ENCODE measurements at regions of chr2 and their contacts with region 1.

Region 1: GRCh38 chr2:188870289-188870688 is 103.9 kb upstream of the COL3A1 start:
- DNase-seq: no peak
- H3K4me3 Mint-ChIP-seq: no peak overlapping the region
- H3K27ac Mint-ChIP-seq: no peak overlapping the region
- H3K4me1 Mint-ChIP-seq: no peaks in the 10 kb centered on the region
- H3K27me3 Mint-ChIP-seq: no peaks in the 10 kb centered on the region

Region 2: GRCh38 chr2:188884046-188884445 is 13.8 kb after region 1 on chr2:
- intact Hi-C with region 1: no loop called
- DNase-seq: no peak
- H3K4me3 Mint-ChIP-seq: no peak overlapping the region
- H3K27ac Mint-ChIP-seq: no peak overlapping the region
- H3K4me1 Mint-ChIP-seq: no peaks in the 10 kb centered on the region
- H3K27me3 Mint-ChIP-seq: no peaks in the 10 kb centered on the region

Region 3: DNA sequence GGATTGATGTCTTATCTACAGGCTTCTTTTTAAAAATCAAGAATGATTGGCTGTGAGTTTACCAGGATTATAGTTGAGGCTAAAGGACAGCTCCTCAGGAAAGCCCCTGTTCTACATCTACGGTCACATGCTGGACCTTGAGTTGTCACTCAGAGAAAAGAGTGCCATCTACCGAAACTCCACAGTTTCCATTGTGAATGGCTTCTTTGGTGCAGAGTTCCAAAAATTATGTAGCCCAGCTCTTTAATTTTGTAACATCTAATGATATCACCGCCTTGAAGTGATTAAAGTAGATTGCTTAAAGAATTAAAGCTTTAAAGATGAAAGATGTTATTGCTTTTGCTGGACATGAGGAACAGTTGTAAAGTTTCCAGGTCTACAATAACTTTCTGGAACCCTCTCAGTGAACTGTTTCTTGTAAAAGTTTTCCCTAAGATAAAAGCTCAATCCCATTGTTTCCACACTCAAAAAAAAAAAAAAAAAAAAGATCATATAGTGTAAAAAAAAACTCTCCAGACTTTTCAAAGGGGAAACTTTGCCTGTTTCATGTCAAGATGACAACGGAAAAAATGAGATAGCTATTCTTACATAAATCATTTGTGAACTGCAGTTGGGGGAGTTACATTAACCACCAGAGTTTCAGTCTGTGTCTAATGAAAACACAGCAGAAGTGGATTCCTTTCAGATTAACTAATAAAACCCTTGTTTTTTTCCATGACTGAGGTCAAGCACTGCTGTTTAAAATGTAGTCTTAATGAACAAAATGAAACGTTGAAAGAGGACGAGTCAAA is 108.2 kb after region 1 on chr2:
- intact Hi-C with region 1: loop called (anchors 1 kb)
- DNase-seq: no peak
- H3K4me3 Mint-ChIP-seq: peak overlapping the region; percentile 5
- H3K27ac Mint-ChIP-seq: peak overlapping the region; percentile 77
- H3K4me1 Mint-ChIP-seq: peaks cover 17% of the 10 kb centered on the region
- H3K27me3 Mint-ChIP-seq: peaks cover 2% of the 10 kb centered on the region

Measured in activated T-helper 1 cell treated with anti-CD3 and anti-CD28 coated beads, Interleukin-12 subunit alpha, Interleukin-12 subunit beta, Interleukin-2, Interleukin-4 antibody, amounts not matched to agents 30 ng/mL and 10 ng/mL and 1 ng/mL, durations not matched to agents 14 hours and 24 hours and 36 hours (primary cell).